ENCODE measurements at regions of chr21 and their contacts with region 1.

Region 1: GRCh38 chr21:44873356-44874239 is at the start of gene PTTG1IP:
- DNase-seq: peak; percentile 97 to 100 (median 99)
- ATAC-seq: peak; percentile 88
- H3K4me3 ChIP-seq: peak within 1 kb of the TSS; percentile 71
- H3K4me3 Mint-ChIP-seq: peak within 1 kb of the TSS; percentile 90 to 97 (median 96)
- H3K27ac ChIP-seq: peak within 1 kb of the TSS; percentile 81
- H3K27ac Mint-ChIP-seq: peak within 1 kb of the TSS; percentile 84 to 97 (median 92)
- H3K4me1 ChIP-seq: peaks cover 34 to 46% of the 10 kb centered on the region in 2 donors
- H3K4me1 Mint-ChIP-seq: peaks cover 31 to 56% (median 48%) of the 10 kb centered on the region in 7 donors
- H3K27me3 ChIP-seq: no peaks in the 10 kb centered on the region
- H3K27me3 Mint-ChIP-seq: no peaks in the 10 kb centered on the region
- total RNA-seq, gene PTTG1IP: 83.8 to 122 (median 95.6) TPM

Region 2: DNA sequence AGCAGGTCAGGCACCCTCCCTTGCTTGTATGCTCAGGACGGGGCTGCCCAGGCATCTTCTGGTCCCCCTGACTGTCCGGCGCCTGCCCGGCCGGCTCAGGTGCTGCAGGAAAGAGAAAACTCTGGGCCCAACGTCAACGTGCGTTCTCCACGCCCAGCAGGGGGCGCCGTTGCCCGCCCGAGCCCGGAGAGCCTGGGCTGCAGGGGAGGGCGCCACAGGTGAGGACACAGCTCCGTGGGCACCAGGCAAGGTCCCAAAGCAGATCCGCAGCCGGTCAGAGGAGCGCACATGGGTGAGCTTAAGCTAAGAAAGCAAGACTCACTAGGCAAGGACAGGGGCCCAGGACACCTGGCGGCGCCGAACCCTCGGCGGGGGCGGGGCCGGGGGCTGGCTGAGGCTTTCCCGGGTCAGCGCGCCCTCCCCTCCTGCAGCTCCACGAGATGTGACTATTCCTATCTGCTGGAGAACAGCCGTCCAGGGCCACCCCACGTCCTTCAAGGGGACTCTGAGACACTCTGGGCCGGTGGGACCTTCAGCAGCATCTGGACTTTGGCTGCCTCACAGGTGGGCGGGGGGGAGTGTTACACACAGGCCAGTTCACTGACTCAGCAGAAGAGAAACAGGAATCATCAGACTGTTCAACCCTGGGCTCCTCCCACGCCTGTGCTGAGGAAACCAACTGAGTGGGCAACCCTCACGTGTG is 362.9 kb before region 1 on chr21:
- CTCF ChIA-PET with region 1: interaction called, 3 read pairs
- POLR2A ChIA-PET with region 1: no interaction called
- intact Hi-C with region 1: loop called in 1 of 2 experiments (anchors 1 kb)
- DNase-seq: peak; percentile 65 to 95 (median 85)
- ATAC-seq: peak; percentile 87
- H3K4me3 ChIP-seq: peak overlapping the region; percentile 64
- H3K4me3 Mint-ChIP-seq: peak overlapping the region in 9 of 10 donors; percentile 58 to 75 (median 65)
- H3K27ac ChIP-seq: no peak overlapping the region
- H3K27ac Mint-ChIP-seq: peak overlapping the region in 3 of 9 donors; percentile 6 to 41 (median 38)
- H3K4me1 ChIP-seq: peaks cover 7 to 13% of the 10 kb centered on the region in 2 donors
- H3K4me1 Mint-ChIP-seq: peaks cover 0 to 3% (median 0%) of the 10 kb centered on the region in 7 donors
- H3K27me3 ChIP-seq: no peaks in the 10 kb centered on the region
- H3K27me3 Mint-ChIP-seq: no peaks in the 10 kb centered on the region

Region 3: DNA sequence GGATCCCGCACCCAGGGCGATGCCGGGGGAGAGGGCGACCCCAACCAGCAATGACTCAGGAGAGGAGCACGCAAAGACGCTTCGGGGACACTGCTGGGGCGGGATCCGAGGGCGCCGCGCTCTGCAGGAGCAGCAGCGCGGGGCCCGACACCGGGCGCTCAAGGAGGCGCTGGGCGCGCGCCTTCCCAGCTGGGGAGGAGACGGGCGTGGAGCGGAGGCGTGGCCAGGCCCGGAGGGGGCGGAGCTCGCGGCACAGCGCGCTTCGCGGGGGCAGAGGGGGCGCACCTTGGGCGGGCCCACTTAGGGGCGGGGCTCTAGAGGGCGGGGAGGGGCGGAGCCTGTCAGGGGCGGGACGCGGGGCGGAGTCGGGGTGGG is 56.1 kb before region 1 on chr21:
- CTCF ChIA-PET with region 1: interaction called, 3 read pairs
- POLR2A ChIA-PET with region 1: interaction called, 8 read pairs
- intact Hi-C with region 1: loop called (anchors 1 kb)
- DNase-seq: peak; percentile 87 to 98 (median 91)
- ATAC-seq: peak; percentile 96
- H3K4me3 ChIP-seq: peak overlapping the region; percentile 68
- H3K4me3 Mint-ChIP-seq: peak overlapping the region in 9 of 10 donors; percentile 27 to 83 (median 66)
- H3K27ac ChIP-seq: peak overlapping the region; percentile 96
- H3K27ac Mint-ChIP-seq: peak overlapping the region in 3 of 9 donors; percentile 21 to 42 (median 32)
- H3K4me1 ChIP-seq: no peaks in the 10 kb centered on the region
- H3K4me1 Mint-ChIP-seq: peaks cover 5 to 31% (median 10%) of the 10 kb centered on the region in 7 donors
- H3K27me3 ChIP-seq: no peaks in the 10 kb centered on the region
- H3K27me3 Mint-ChIP-seq: peaks cover 0 to 9% (median 0%) of the 10 kb centered on the region in 5 donors

Region 4: DNA sequence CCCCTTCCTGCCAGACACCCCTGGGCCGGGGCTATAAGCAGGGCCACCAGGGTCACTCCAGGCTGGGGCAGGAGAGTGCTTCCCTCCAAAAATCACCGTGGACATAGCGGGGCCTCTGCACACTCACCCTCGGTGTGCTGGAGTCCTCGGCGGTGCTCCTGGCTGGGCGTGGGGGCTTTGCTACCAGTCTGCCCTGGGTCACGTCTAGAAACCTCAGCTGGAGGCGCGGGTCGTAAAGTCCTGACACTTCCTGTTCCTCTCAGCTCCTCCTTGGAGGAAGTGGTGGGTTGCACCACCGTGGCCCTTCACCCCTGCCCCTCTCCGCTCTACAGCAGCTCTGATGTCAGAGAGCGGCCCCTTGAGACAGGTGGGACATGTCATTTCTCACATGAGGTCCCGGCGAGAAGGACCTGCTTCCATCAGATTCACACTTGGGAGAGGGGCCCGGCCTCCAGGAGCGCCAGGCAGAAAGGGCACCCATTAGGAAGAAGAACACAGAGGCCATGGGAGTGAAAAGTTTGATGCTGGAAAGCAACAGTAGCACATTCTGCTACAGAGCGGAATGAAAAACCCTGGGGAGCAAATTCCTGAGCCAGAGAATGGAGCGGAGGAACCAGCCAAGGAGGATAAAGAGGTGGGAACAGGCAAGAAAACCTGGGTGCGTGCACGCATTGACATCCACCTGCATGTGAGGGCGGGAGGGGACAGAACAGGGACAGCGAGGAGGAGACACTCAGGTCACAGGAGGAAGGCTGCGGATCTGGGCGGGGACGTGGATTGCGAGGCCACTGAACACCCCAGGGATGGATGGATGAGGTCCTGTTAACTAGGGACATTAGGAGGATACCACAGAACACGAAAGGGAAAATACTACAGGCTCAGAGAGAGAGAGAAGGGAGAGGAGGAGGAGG is 47.4 kb after region 1 on chr21 and contains the start of gene ITGB2:
- CTCF ChIA-PET with region 1: no interaction called
- POLR2A ChIA-PET with region 1: interaction called, 52 read pairs
- intact Hi-C with region 1: loop called in 1 of 2 experiments (anchors 5 kb)
- DNase-seq: peak in 5 of 9 donors; percentile 56 to 66 (median 58)
- ATAC-seq: peak; percentile 73
- H3K4me3 ChIP-seq: peak within 1 kb of the TSS; percentile 88
- H3K4me3 Mint-ChIP-seq: peak within 1 kb of the TSS; percentile 89 to 100 (median 99)
- H3K27ac ChIP-seq: peak within 1 kb of the TSS; percentile 72
- H3K27ac Mint-ChIP-seq: peak within 1 kb of the TSS; percentile 76 to 98 (median 95)
- H3K4me1 ChIP-seq: peaks cover 43 to 61% of the 10 kb centered on the region in 2 donors
- H3K4me1 Mint-ChIP-seq: peaks cover 63 to 85% (median 75%) of the 10 kb centered on the region in 7 donors
- H3K27me3 ChIP-seq: no peaks in the 10 kb centered on the region
- H3K27me3 Mint-ChIP-seq: no peaks in the 10 kb centered on the region
- total RNA-seq, gene ITGB2: 280 to 877 (median 371) TPM

Region 5: DNA sequence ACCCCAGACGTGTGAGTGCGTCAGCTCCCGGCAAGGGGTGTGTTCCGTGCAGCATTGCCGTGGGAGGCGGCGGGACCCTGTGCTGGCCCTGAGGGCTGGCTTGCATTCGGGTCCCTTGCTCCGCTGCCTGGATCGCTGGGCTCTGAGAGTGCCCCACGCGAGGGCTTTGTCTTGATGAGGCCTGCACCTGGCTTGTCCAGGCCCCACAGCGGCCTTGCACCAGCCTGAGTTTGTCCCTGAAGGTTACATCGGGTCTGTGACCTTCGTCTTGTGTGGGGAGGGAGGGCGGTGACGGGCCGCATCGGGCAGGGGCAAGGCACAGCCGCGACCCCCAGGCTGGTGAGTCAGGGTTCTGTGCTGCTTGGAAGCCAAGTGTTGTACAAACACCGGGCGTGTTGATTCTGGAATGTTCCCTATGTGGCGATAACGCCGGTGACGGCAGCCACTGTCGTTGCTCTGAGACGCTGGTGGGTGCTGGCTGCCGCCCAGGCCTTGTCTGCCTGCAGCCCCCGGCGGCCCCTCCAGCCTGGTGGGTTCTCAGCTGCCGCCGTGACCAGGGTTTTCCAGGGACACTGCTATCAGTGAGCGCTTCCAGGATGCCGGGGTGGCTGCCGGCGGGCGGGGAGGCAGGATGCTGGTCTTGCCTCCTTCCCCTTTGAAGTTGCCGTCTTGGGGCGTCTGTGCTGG is 109.1 kb after region 1 on chr21:
- CTCF ChIA-PET with region 1: no interaction called
- POLR2A ChIA-PET with region 1: no interaction called
- intact Hi-C with region 1: no loop called
- DNase-seq: no peak
- ATAC-seq: no peak
- H3K4me3 ChIP-seq: no peak overlapping the region
- H3K4me3 Mint-ChIP-seq: no peak overlapping the region
- H3K27ac ChIP-seq: no peak overlapping the region
- H3K27ac Mint-ChIP-seq: peak overlapping the region in 1 of 9 donors; percentile 19
- H3K4me1 ChIP-seq: no peaks in the 10 kb centered on the region
- H3K4me1 Mint-ChIP-seq: no peaks in the 10 kb centered on the region
- H3K27me3 ChIP-seq: no peaks in the 10 kb centered on the region
- H3K27me3 Mint-ChIP-seq: no peaks in the 10 kb centered on the region

Region 6: GRCh38 chr21:45590246-45590725 is 716.7 kb after region 1 on chr21:
- CTCF ChIA-PET with region 1: no interaction called
- POLR2A ChIA-PET with region 1: no interaction called
- intact Hi-C with region 1: loop called in 1 of 2 experiments (anchors 5 kb)
- DNase-seq: peak in 3 of 9 donors; percentile 72 to 81 (median 78)
- ATAC-seq: peak; percentile 83
- H3K4me3 ChIP-seq: peak overlapping the region; percentile 42
- H3K4me3 Mint-ChIP-seq: peak overlapping the region in 8 of 10 donors; percentile 21 to 69 (median 48)
- H3K27ac ChIP-seq: peak overlapping the region; percentile 65
- H3K27ac Mint-ChIP-seq: peak overlapping the region in 1 of 9 donors; percentile 16
- H3K4me1 ChIP-seq: peaks cover 21 to 22% of the 10 kb centered on the region in 2 donors
- H3K4me1 Mint-ChIP-seq: peaks cover 0 to 22% (median 7%) of the 10 kb centered on the region in 7 donors
- H3K27me3 ChIP-seq: no peaks in the 10 kb centered on the region
- H3K27me3 Mint-ChIP-seq: peaks cover 0 to 17% (median 11%) of the 10 kb centered on the region in 5 donors